GM12878 (cell line): ENCODE measurements at regions of chr20 and their contacts with region 1.

Region 1: DNA sequence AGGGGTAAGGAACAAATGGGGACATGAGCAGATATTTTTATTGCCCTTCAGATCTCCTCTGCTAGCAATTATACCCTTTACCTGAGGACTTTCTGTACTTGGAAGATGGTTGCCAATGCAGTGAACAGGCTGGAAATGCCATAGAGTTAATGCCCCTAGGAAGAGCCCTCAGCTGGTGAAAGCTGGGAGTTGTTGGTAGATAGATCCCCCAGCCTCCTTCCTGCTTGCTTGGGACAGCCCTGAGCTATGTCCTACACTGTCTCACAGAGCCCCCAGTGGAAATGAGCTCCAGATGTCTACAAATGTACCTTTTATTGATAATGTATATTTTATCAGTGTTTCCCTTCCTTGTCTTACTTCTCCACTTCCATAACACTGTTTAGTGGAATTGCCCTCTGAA is 87.6 kb upstream of the PAK5 start:
- DNase-seq: no peak
- ATAC-seq: no peak; the same call in 2 of the 3 replicates
- H3K4me3 ChIP-seq: no peak overlapping the region
- H3K27ac ChIP-seq: no peak overlapping the region
- H3K4me1 ChIP-seq: peaks cover 11% of the 10 kb centered on the region
- H3K27me3 ChIP-seq: no peaks in the 10 kb centered on the region
- CTCF ChIP-seq: no peak
- EP300 ChIP-seq: no peak
- POLR2A ChIP-seq: no peak
- RAD21 ChIP-seq: no peak

Region 2: DNA sequence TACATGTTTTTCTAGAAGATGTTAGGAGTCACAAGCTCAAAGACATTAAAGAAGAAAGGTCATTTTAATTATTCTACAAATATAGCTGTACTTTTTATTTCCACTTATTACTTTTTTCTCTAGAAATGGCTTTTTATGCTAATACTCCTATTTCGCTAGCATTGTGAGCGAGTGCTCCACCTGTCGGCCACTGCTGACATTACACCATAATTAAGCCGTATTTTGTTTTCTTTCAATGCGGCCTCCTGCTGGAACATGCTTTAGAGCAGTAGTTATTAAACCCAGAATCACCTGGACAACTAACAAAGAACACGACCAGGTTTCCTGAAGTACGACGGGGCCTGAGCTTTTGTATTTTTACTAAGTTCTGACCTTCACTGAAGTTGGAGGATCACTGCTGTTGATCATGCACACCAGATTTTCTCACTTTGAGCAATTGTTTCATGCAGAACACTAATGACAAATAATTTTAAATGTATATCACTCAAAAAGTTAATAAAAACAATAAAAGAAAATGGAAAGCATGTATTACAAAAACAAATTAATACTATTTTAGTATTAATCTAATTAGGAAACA is 13.5 kb before region 1 on chr20:
- CTCF ChIA-PET with region 1: interaction called, 34 read pairs
- POLR2A ChIA-PET with region 1: no interaction called
- RAD21 ChIA-PET with region 1: no interaction called
- SMC1A ChIA-PET with region 1: no interaction called
- in situ Hi-C with region 1: no loop called
- intact Hi-C with region 1: no loop called
- DNase-seq: no peak
- ATAC-seq: peak; percentile 42; the same call in 2 of the 3 replicates
- H3K4me3 ChIP-seq: no peak overlapping the region
- H3K27ac ChIP-seq: no peak overlapping the region
- H3K4me1 ChIP-seq: no peaks in the 10 kb centered on the region
- H3K27me3 ChIP-seq: no peaks in the 10 kb centered on the region; a peak in 1 of 4 replicates
- CTCF ChIP-seq: peak; percentile 70 to 79 (median 74)
- EP300 ChIP-seq: no peak
- POLR2A ChIP-seq: no peak
- RAD21 ChIP-seq: peak; percentile 47